ENCODE measurements at regions of chr1 and their contacts with region 1.

Region 1: DNA sequence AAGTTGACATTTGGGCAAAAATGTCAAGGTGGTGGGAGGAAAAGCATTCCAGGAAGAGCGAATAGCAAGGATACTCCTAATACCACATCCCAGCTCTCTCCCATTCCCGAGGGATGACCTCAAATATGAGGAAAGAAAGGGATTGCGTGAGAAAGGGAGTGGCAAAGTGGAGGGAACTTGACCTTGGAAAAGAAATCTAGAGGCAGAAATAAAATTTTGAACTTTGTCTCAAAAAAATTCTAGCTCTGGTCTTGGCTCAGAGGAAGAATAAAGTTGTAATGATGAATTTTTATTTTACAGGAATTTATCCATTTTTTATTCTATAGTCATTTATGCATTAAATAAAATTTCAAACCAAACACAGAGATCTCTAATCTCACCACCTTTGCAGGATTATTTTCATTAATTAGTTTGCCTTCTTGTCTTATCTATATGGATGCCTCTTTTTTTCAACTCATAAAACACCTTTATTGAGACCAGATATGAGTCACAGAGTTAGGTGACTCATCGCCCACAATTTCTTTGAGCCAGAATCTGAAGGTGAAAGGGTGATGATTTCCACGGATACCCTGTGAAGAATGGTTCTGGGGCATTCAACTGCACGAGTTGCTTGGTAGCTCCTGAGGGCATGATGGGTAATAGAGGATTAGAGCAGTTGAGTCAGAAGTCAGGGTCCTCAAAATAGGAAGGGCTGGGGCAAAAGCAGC is 128.0 kb downstream of the TBX19 start:
- DNase-seq: peak; percentile 82
- H3K4me3 Mint-ChIP-seq: no peak overlapping the region
- H3K27ac Mint-ChIP-seq: peak overlapping the region; percentile 32
- H3K4me1 Mint-ChIP-seq: peaks cover 34% of the 10 kb centered on the region
- H3K27me3 Mint-ChIP-seq: no peaks in the 10 kb centered on the region

Region 2: GRCh38 chr1:168136709-168137514 is 271.8 kb before region 1 on chr1 and contains the start of gene GPR161:
- CTCF ChIA-PET with region 1: no interaction called
- intact Hi-C with region 1: loop called (anchors 2 kb)
- DNase-seq: peak; percentile 37
- H3K4me3 Mint-ChIP-seq: peak within 1 kb of the TSS; percentile 75
- H3K27ac Mint-ChIP-seq: no peak within 1 kb of the TSS
- H3K4me1 Mint-ChIP-seq: peaks cover 39% of the 10 kb centered on the region
- H3K27me3 Mint-ChIP-seq: peaks cover 26% of the 10 kb centered on the region
- total RNA-seq, gene GPR161: 0.12 to 0.29 TPM

Region 3: DNA sequence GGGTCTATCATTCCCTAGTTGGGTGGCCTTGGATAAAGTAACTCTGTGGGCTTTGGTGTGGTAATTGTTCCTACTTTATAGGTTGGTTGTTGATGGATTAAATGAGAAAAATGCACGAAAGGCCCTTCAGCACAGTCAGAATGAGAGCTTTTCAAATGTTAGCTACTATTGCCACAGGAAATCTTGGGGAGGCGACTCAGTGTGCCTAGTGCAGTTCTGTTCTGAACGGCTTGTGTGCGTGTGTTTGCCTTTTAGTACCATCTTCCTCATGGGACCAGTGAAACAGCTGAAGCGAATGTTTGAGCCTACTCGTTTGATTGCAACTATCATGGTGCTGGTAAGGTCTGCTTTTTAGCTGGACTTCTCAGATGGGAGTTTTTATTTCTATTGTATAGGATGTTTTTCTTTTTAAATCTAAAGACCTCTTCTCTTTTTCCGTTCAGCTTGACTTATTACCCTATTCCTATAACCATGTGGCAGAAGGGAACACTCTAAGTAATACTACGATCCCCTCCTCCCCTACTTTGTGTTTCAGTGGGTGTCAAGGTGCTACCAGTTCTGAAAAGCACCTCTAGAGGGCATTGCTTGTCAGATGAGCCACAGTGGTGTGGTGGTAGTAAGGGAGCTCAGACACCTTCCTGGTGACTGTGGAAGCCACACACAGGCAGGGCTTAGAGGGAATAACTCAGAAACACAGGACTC is 173.7 kb before region 1 on chr1:
- CTCF ChIA-PET with region 1: no interaction called
- intact Hi-C with region 1: loop called (anchors 5 kb)
- DNase-seq: peak; percentile 53
- H3K4me3 Mint-ChIP-seq: no peak overlapping the region
- H3K27ac Mint-ChIP-seq: peak overlapping the region; percentile 48
- H3K4me1 Mint-ChIP-seq: peaks cover 41% of the 10 kb centered on the region
- H3K27me3 Mint-ChIP-seq: no peaks in the 10 kb centered on the region

Region 4: GRCh38 chr1:168421399-168422004 is 12.8 kb after region 1 on chr1:
- CTCF ChIA-PET with region 1: no interaction called
- intact Hi-C with region 1: loop called (anchors 1 kb)
- DNase-seq: peak; percentile 22
- H3K4me3 Mint-ChIP-seq: no peak overlapping the region
- H3K27ac Mint-ChIP-seq: peak overlapping the region; percentile 5
- H3K4me1 Mint-ChIP-seq: peaks cover 13% of the 10 kb centered on the region
- H3K27me3 Mint-ChIP-seq: no peaks in the 10 kb centered on the region

Region 5: DNA sequence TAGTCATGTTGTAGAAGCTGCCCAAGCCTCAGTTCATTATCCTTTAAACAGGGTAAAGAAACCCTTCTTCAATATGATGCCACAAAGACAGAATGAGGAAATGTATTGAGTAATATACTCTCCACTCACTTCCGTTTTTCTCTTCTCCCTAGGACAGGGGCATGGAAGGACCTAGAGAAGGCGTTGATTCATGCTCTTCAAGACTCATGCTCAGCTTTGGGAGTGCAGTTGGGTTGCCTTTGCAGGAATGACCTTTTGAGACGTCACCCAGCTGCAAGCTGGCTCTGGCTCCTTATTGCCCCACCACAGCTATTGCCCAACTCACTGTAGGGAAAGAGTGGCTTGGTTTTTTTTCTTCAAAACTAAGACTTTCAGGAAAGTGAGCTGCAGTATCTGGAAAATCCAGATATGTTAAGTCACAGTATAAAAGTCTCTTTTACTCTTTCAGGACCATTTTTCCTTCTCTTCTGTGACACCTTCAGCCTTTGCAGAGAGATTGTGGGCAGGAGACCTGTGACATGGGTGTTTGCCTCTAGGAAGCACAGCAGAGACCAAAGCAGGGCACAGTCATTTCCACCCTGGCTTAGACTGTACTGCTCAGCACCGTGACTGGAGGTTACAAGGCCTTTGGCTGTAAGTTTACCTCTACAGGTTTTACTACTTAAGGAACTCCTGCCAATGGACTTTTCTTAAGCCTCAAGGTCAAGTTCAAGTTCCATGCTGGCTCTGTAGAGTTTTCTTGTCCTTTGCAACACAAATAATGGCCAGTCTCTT is 95.6 kb after region 1 on chr1:
- CTCF ChIA-PET with region 1: no interaction called
- intact Hi-C with region 1: no loop called
- DNase-seq: peak; percentile 56
- H3K4me3 Mint-ChIP-seq: no peak overlapping the region
- H3K27ac Mint-ChIP-seq: no peak overlapping the region
- H3K4me1 Mint-ChIP-seq: peaks cover 26% of the 10 kb centered on the region
- H3K27me3 Mint-ChIP-seq: no peaks in the 10 kb centered on the region

Region 6: DNA sequence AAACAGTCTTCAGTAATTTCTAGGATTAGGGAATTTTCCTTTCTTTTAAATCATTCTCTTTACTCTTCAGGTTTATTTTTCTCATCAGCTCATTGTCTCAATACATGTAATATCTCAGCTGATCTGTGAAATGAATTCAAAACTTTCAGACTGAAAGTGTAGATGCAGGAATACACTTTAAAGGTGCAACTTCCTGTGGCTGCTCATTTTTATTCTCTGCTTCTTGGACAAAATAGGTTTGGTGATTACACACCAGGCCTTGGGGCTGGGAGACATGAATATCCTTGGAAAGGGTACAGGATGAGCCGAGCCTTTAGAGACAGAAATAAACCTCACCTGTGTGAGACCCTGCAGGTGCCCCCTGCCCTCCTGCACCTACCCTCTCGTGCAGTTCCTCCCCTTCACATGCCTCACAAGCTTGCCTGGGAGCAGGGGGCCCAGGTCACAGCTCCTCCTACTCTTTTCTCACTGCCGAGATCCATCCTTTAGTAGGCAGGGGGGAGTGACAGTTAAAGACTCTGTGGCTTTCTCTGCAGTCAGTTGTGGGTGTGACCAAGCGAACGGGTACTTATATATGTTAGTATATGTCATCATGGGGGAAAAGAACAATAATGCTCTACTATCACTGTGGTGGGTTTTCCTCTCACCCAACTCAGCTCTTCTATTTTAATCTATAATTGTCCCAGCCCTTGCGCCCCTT is 111.5 kb after region 1 on chr1:
- CTCF ChIA-PET with region 1: no interaction called
- intact Hi-C with region 1: loop called (anchors 2 kb)
- DNase-seq: peak; percentile 59
- H3K4me3 Mint-ChIP-seq: peak overlapping the region; percentile 34
- H3K27ac Mint-ChIP-seq: peak overlapping the region; percentile 74
- H3K4me1 Mint-ChIP-seq: peaks cover 39% of the 10 kb centered on the region
- H3K27me3 Mint-ChIP-seq: no peaks in the 10 kb centered on the region